Naive thymus-derived CD8-positive, alpha-beta T cell (primary cell): ENCODE measurements at regions of chr18 and their contacts with region 1.

Region 1: DNA sequence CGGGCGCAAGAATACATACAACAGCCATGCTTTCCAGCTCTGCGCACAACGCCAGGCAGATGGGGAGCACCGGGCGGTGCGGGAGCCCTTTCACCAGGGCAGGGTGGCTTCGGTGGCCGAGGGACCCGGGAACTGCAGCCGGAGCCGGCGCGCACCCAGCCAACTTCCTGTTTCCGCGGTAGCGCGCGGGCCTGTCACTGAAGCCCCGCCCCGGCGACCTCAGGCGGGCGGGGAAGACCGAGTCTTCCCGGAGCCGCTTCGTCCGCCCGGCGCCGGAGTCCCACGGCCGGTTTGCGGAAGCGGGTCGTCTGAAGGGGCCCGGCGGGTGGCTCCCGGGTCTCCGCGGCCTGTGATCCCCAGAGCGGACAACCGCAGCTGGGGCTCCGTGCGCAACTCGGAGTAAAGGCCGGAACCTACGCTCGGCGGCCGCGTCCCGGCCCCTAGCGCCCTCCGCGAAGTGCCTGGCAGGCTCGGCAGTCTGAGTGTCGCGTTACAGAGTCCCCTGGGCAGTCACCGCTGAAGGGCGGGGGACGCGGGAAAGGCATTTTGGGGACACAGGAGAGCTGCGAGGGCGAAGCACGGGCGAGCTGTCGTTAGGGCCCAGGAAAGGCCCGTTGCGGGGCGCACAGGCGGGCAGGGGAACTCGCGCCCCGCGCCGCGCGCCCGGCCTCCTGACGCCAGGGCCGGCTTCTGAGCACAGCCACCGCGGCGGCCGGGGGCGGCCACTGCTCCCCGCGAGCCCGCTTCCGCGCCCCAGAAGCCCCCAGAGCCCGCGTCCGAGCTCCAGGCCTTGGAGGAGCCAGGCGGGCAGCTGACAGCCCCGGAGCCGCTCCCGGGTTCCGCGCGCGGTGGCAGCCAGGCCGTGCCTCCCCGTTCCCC is at the start of gene MPPE1:
- DNase-seq: peak; percentile 74 to 89 (median 84)
- ATAC-seq: peak; percentile 87 to 92
- H3K4me3 Mint-ChIP-seq: peak within 1 kb of the TSS; percentile 89 to 96 (median 92)
- H3K27ac Mint-ChIP-seq: peak within 1 kb of the TSS; percentile 90 to 97 (median 96)
- H3K4me1 Mint-ChIP-seq: peaks cover 6 to 31% (median 25%) of the 10 kb centered on the region in 4 donors
- H3K27me3 Mint-ChIP-seq: no peaks in the 10 kb centered on the region
- polyA plus RNA-seq, gene MPPE1: 37.1 to 40.9 (median 37.5) TPM

Region 2: DNA sequence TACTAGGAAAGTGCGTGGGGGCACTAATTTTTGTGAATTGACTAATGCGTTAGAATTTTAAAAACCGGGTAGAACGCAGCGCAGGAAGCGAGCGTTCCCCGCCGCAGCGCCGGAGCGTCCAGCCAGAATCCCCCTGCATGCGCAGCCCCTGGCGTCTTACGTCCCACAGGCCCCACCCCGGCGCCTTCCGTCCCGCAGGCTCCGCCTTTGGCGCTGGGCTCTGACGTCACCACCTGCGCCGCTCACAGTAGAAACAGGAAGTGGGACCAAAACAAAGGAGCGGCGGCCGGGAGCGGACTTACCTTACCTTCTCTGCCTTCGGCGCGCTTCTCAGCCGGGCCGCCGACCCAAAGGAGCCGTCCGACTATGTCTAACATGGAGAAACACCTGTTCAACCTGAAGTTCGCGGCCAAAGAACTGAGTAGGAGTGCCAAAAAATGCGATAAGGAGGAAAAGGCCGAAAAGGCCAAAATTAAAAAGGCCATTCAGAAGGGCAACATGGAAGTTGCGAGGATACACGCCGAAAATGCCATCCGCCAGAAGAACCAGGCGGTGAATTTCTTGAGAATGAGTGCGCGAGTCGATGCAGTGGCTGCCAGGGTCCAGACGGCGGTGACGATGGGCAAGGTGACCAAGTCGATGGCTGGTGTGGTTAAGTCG is 57.1 kb before region 1 on chr18 and contains the start of gene CHMP1B:
- POLR2A ChIA-PET with region 1: interaction called, 15 read pairs
- DNase-seq: peak; percentile 92 to 98 (median 96)
- ATAC-seq: peak; percentile 81 to 82
- H3K4me3 Mint-ChIP-seq: peak within 1 kb of the TSS; percentile 92 to 100 (median 100)
- H3K27ac Mint-ChIP-seq: peak within 1 kb of the TSS; percentile 99 to 100 (median 100)
- H3K4me1 Mint-ChIP-seq: peaks cover 16 to 60% (median 41%) of the 10 kb centered on the region in 4 donors
- H3K27me3 Mint-ChIP-seq: no peaks in the 10 kb centered on the region
- polyA plus RNA-seq, gene CHMP1B: 45.2 to 58.0 (median 57.3) TPM

Region 3: DNA sequence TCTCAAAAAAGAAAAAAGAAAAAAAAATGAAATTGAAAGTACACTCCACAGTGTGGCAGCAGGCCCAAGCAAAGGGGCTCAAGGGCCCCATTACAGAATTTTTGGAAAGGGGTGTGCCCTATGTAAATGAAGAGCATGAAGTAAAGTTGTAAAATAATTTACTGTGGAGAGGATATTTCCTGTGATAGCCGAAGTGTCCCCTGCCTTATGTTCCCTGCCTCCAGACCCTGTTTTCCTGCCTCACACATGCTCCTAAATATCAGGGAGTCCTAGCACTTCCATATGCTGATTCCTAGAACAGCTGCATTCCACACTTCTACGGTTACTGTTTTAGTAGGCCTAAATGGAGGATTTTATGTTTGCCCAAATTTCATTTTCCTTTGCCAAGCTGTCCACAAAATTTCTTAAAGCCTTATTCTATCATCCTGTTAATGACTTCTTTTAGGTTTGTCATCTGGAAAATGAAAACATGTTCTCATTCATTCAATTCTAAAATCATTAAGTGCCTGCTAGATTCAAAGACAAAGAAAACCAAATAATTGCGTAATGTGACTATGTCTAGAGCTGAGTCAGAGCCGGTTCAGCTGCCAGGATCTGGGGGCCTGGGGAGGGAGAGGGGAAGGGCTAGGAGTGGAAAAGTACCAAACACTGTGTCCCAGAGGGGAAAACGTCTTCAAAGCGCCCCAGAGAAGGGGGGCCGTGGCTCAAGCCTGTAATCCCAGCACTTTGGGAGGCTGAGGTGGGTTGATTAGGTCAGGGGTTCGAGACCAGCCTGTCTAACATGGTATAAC is 47.0 kb after region 1 on chr18:
- POLR2A ChIA-PET with region 1: no interaction called
- DNase-seq: no peak
- ATAC-seq: no peak
- H3K4me3 Mint-ChIP-seq: no peak overlapping the region
- H3K27ac Mint-ChIP-seq: peak overlapping the region in 1 of 10 donors; percentile 56
- H3K4me1 Mint-ChIP-seq: no peaks in the 10 kb centered on the region
- H3K27me3 Mint-ChIP-seq: no peaks in the 10 kb centered on the region

Region 4: DNA sequence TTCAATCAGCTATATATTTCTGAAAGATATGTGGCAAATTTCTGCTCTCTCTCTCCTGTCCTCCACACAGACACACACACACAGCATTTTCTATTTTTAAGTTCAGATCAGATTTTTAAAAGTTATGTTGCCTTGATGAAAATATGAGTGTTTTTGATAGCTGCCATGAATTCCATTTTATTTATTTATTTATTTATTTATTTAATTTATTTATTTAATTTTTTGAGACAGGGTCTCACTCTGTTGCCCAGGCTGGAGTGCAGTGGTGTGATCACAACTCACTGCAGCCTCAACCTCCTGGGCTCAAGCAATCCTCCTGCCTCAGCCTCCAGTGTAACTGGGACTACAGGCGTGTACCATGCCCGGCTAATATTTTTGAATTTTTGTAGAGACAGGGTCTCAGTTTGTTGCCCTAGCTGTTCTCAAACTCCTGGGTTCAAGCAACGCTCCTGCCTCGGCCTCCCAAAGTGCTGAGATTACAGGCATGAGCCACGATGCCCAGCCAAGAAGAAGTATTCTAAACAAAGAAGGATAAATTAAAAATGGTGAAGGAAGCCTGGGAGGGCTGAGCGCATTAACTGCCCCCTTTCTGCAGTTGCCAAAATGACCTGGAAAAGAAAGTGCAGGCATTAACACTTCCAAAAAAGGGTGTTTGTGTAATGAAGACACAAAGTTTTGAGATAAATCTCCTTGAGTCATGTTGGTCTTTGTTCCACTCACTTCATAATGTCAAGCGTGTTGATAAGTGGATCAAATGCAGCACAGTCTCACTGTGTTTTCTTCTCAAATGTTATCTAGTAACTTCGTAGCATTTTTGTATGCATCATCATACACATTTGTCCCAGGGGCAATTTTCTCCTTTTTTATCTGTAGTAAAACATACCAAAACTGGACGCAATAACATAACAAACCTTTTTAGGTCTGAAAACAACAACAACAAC is 61.8 kb after region 1 on chr18:
- POLR2A ChIA-PET with region 1: no interaction called
- DNase-seq: no peak
- ATAC-seq: no peak
- H3K4me3 Mint-ChIP-seq: no peak overlapping the region
- H3K27ac Mint-ChIP-seq: no peak overlapping the region
- H3K4me1 Mint-ChIP-seq: no peaks in the 10 kb centered on the region
- H3K27me3 Mint-ChIP-seq: peaks cover 0 to 1% (median 0%) of the 10 kb centered on the region in 5 donors

Region 5: DNA sequence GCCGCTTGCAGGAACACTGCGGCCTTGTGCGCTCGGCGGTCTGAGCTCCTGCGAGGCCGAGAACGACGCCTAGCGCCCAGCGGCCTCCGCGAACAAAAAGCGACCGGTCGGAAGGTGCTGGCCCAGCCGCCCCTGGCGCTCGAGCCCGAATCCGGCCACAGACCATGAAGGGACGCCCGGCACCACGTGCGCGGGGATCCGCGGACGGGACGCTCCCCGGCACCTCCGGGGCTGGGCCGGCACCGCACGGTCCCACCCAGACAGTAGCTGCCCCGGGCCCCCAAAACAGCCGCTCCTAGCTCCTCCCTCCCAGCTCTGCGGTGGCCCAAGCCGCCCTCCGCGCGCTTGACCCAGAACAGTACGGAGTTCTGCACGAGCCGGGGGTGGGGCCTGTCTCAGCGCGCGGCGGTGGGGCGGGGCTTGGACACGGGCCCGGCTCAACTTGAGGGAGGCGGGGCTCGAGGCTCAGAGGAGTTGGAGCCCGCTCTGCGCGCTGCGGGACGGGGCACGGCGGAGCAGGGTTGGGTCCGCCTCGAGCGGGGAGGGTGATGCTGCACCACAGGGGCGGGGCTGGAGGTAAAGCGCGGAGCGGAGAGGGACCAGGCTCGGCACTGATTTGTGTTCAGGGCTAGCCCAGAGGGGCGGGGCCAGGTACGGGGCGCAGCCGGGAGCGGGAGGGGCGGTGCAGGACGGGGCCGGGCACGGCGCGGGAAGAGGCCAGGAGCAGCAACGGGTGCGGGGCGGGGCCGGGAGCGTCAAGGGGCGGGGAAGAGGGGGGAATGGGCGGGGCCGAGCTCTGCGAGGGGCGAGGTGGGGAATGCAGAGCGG is 72.3 kb after region 1 on chr18:
- POLR2A ChIA-PET with region 1: interaction called, 14 read pairs
- DNase-seq: peak; percentile 88 to 96 (median 92)
- ATAC-seq: peak; percentile 90 to 95
- H3K4me3 Mint-ChIP-seq: peak overlapping the region; percentile 82 to 92 (median 86)
- H3K27ac Mint-ChIP-seq: peak overlapping the region in 8 of 10 donors; percentile 43 to 88 (median 69)
- H3K4me1 Mint-ChIP-seq: peaks cover 4 to 21% (median 17%) of the 10 kb centered on the region in 4 donors
- H3K27me3 Mint-ChIP-seq: peaks cover 0 to 7% (median 0%) of the 10 kb centered on the region in 5 donors